Mammary epithelial cell (primary cell): ENCODE measurements at regions of chr16 and their contacts with region 1.

Region 1: GRCh38 chr16:69930117-69930776 is 20.9 kb upstream of the CLEC18A start:
- DNase-seq: peak; percentile 23
- H3K4me3 ChIP-seq: no peak overlapping the region
- H3K27ac ChIP-seq: no peak overlapping the region
- H3K4me1 ChIP-seq: peaks cover 9% of the 10 kb centered on the region
- H3K27me3 ChIP-seq: no peaks in the 10 kb centered on the region
- CTCF ChIP-seq: peak; percentile 53 to 71

Region 2: DNA sequence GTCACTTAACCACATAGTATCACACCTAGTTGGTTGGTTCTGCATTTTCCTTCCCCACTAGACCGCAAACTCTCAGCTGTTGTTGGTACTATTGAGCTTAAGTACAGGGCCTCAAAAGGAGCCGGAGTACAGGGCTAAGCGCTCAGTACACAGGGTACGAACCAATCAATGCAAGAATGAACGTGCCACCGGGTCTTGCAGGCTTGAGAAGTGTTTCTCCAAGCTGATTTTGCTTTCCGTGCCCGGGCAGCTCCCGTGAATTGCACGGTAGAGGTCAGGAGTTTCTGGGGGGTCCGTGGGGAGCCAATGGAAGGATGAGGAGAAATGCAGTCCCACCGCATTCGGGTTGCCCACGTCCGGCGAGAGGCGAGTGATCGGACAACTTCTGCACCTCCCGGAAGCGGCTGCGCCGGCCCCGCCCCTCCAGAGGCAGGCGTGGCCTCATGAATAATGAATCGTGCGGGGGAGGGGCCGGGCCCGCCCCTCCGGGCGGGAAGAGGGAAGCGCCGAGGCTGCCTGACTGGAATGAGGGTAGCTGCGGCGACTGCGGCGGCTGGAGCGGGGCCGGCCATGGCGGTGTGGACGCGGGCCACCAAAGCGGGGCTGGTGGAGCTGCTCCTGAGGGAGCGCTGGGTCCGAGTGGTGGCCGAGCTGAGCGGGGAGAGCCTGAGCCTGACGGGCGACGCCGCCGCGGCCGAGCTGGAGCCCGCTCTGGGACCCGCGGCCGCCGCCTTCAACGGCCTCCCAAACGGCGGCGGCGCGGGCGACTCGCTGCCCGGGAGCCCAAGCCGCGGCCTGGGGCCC is 743.4 kb before region 1 on chr16 and contains the start of gene SNTB2:
- CTCF ChIA-PET with region 1: no interaction called
- dilution Hi-C with region 1: no loop called
- in situ Hi-C with region 1: no loop called
- intact Hi-C with region 1: no loop called
- DNase-seq: peak; percentile 87
- H3K4me3 ChIP-seq: peak within 1 kb of the TSS; percentile 81 to 93 (median 85)
- H3K27ac ChIP-seq: peak within 1 kb of the TSS; percentile 65
- H3K4me1 ChIP-seq: peaks cover 43% of the 10 kb centered on the region
- H3K27me3 ChIP-seq: no peaks in the 10 kb centered on the region
- CTCF ChIP-seq: no peak
- total RNA-seq, gene SNTB2: 20.3 to 31.2 TPM

Region 3: DNA sequence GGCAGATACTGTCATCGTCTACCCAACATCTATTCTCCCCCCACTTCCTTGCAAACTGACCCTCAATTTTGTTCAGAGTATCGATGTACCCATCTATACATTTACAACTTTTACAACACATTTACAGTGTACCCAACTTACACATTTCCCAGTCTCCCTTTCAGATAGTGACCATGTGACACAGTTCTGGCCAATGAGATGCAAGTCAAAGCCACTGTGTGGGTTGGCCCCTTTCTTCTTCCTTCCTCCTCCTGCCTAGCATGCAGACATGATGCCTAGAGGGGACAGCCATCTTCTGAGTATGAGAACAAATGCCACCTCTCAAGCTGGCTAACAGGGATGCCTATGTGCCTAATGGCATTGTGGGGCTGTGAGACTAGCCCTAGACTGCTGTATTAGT is 375.8 kb before region 1 on chr16:
- CTCF ChIA-PET with region 1: no interaction called
- dilution Hi-C with region 1: no loop called
- in situ Hi-C with region 1: no loop called
- intact Hi-C with region 1: no loop called
- DNase-seq: no peak
- H3K4me3 ChIP-seq: no peak overlapping the region
- H3K27ac ChIP-seq: no peak overlapping the region
- H3K4me1 ChIP-seq: no peaks in the 10 kb centered on the region
- H3K27me3 ChIP-seq: no peaks in the 10 kb centered on the region
- CTCF ChIP-seq: no peak

Region 4: GRCh38 chr16:69709456-69710084 is 220.7 kb before region 1 on chr16:
- CTCF ChIA-PET with region 1: no interaction called
- dilution Hi-C with region 1: no loop called
- in situ Hi-C with region 1: no loop called
- intact Hi-C with region 1: loop called (anchors 5 kb)
- DNase-seq: peak; percentile 60
- H3K4me3 ChIP-seq: no peak overlapping the region
- H3K27ac ChIP-seq: no peak overlapping the region
- H3K4me1 ChIP-seq: peaks cover 33% of the 10 kb centered on the region
- H3K27me3 ChIP-seq: no peaks in the 10 kb centered on the region
- CTCF ChIP-seq: peak; percentile 61 to 63

Region 5: GRCh38 chr16:70018254-70018653 is 88.0 kb after region 1 on chr16:
- CTCF ChIA-PET with region 1: no interaction called
- dilution Hi-C with region 1: no loop called
- in situ Hi-C with region 1: no loop called
- intact Hi-C with region 1: no loop called
- DNase-seq: peak; percentile 27
- H3K4me3 ChIP-seq: no peak overlapping the region
- H3K27ac ChIP-seq: no peak overlapping the region
- H3K4me1 ChIP-seq: no peaks in the 10 kb centered on the region
- H3K27me3 ChIP-seq: no peaks in the 10 kb centered on the region
- CTCF ChIP-seq: peak; percentile 7 to 18